Ascending aorta (tissue), 2 donors: ENCODE measurements at regions of chr18 and their contacts with region 1.

Region 1: GRCh38 chr18:80034068-80034851 is at the start of gene RBFA:
- DNase-seq: peak; percentile 90 to 99
- H3K4me3 ChIP-seq: peak within 1 kb of the TSS; percentile 83 to 88
- H3K27ac ChIP-seq: peak within 1 kb of the TSS; percentile 80 to 90
- H3K4me1 ChIP-seq: peaks cover 0 to 5% of the 10 kb centered on the region in 2 donors
- H3K27me3 ChIP-seq: no peaks in the 10 kb centered on the region
- CTCF ChIP-seq: peak; percentile 14 to 26 (median 17)
- total RNA-seq, gene RBFA: 23.1 TPM

Region 2: GRCh38 chr18:79679111-79679872 is 355.0 kb before region 1 on chr18 and contains the start of gene CTDP1:
- intact Hi-C with region 1: loop called (anchors 5 kb)
- DNase-seq: peak; percentile 96 to 99
- H3K4me3 ChIP-seq: peak within 1 kb of the TSS; percentile 92 to 99
- H3K27ac ChIP-seq: peak within 1 kb of the TSS; percentile 98 to 100
- H3K4me1 ChIP-seq: peaks cover 2 to 18% of the 10 kb centered on the region in 2 donors
- H3K27me3 ChIP-seq: no peaks in the 10 kb centered on the region
- CTCF ChIP-seq: no peak
- total RNA-seq, gene CTDP1: 31.7 TPM

Region 3: DNA sequence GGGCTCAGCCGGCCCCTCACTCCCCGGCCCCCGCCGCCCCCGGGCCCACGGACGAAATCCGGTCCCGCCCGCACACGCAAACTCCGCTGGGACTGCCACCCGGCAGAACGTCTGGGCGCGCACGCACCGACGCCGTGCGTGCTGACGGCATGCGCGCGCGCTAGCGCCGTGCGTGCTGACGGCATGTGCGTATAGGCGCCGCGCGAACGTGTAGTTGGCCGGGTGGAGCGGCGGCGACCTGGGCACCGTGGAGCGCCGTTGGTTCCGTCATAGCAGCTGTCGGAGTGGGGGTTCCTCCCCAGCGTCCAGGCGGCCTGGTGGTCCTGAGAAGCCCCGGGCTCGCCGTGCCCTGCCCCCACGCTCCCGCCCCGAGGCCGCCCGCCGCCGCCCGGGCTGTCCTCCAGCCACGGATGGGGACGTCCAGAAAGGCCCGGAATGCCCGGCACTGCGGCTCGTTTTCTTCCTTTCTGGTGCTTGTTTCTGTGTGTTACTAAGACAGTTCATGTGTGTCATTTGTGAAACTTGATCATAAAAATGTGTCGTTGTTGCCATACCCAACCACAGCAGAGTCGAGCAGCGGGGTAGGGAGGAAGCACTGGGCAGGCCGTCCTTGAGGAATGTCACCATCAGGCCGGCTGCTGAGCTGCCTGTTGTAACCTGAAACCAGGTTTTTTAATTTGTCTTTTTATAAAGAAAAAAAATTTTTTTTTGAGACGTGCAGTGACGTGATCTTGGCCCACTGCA is 45.6 kb before region 1 on chr18 and contains the start of gene TXNL4A:
- intact Hi-C with region 1: loop called (anchors 1 kb)
- DNase-seq: peak in 1 of 2 donors; percentile 91
- H3K4me3 ChIP-seq: peak within 1 kb of the TSS; percentile 85 to 91
- H3K27ac ChIP-seq: peak within 1 kb of the TSS; percentile 95 to 97
- H3K4me1 ChIP-seq: peaks cover 8 to 11% of the 10 kb centered on the region in 2 donors
- H3K27me3 ChIP-seq: no peaks in the 10 kb centered on the region
- CTCF ChIP-seq: no peak
- total RNA-seq, gene TXNL4A: 16.5 TPM

Region 4: GRCh38 chr18:80103231-80103630 is 69.0 kb after region 1 on chr18:
- intact Hi-C with region 1: loop called (anchors 1 kb)
- DNase-seq: peak; percentile 44 to 87
- H3K4me3 ChIP-seq: no peak overlapping the region
- H3K27ac ChIP-seq: peak overlapping the region; percentile 39 to 74
- H3K4me1 ChIP-seq: peaks cover 4 to 6% of the 10 kb centered on the region in 2 donors
- H3K27me3 ChIP-seq: no peaks in the 10 kb centered on the region
- CTCF ChIP-seq: no peak

Region 5: GRCh38 chr18:80126797-80127196 is 92.5 kb after region 1 on chr18:
- intact Hi-C with region 1: no loop called
- DNase-seq: no peak
- H3K4me3 ChIP-seq: no peak overlapping the region
- H3K27ac ChIP-seq: no peak overlapping the region
- H3K4me1 ChIP-seq: no peaks in the 10 kb centered on the region
- H3K27me3 ChIP-seq: no peaks in the 10 kb centered on the region
- CTCF ChIP-seq: no peak

Region 6: DNA sequence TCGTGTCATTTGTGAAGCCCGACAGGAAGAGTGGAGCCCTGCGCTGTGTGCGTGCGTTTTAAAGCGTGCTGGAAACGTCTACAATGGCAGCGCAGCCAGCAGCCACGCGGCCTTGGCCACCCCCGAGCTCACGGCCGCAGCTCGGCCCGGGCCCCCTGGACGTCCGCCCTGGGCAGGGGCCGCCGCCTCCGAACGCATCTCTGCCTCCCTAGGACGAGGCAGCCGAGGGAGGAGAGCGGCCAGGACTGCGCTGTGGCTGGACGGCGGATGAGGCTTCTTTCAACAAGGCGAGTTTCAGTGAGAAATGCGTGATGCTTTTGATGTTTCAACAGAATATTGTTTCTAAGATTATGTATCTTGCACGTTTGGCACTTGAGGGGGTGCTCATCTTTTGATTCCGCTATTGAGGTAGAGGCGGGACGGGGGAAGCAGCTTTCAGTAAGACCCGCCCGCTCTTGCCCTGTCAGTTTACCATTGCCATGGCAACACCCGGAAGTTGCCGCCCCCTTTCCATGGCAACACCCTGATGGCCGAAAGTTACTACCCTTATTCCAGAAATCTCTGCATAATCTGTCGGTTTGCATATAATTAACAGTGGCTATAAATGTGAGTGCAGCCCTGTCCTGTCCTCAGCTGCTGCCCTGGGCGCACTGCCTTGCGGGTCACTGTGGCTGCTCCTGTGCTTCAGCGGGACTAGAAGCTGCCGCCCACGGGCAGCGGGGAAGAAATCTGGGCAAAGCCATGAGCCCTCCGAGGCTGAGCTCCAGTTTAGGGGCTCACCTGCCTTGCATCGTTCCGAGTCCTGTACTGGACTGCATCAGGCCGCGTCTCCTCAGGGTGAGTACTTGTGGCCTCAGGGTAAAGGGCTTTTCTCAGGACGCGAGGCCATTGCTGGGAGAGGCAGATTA is 113.4 kb after region 1 on chr18:
- intact Hi-C with region 1: loop called (anchors 5 kb)
- DNase-seq: peak; percentile 61 to 90
- H3K4me3 ChIP-seq: peak overlapping the region; percentile 61 to 68
- H3K27ac ChIP-seq: no peak overlapping the region
- H3K4me1 ChIP-seq: no peaks in the 10 kb centered on the region
- H3K27me3 ChIP-seq: no peaks in the 10 kb centered on the region
- CTCF ChIP-seq: no peak

Region 7: GRCh38 chr18:80229363-80230127 is 195.3 kb after region 1 on chr18:
- intact Hi-C with region 1: no loop called
- DNase-seq: no peak
- H3K4me3 ChIP-seq: no peak overlapping the region
- H3K27ac ChIP-seq: no peak overlapping the region
- H3K4me1 ChIP-seq: no peaks in the 10 kb centered on the region
- H3K27me3 ChIP-seq: no peaks in the 10 kb centered on the region
- CTCF ChIP-seq: no peak